ENCODE measurements at regions of chr9 and their contacts with region 1.

Region 1: DNA sequence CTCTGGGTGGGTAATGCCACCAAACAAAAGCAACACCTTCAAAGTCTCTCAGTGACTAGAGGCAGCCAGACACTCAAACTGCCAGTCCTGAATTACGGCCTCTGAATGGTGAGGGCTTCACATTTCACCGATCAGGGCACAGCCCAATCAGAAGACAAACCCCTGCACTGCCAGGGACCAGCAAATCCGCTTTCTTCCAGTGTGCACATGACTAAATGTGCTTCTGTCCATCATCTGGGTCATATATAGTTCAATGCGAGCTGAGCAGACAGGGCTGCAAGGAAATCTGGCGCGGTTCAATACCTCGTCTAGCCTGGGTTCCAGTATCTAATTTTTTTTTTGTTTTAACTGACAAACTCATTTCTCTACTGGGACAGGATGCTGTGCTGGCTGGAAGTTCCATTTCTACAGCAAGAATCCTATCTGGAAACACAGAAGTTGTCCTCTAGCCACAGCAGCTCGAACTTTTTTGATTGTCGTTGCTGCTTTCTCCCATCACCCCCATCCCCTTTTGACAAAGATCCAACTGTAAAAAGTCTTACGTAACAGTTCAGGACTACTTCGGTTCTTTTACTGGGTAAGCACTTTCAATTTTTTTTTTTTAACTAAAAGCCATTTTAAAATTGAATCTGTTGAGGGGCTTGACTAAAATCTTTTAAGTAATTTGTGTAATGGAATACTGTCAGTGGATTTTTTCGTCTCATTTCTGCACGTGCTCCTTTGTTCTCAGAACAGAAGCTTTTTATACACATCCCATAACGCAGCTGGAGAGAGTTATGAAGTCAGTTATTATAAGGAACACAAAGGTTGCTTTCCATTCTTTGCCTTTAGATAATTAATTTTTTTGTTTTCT is 112.7 kb downstream of the NR6A1 start:
- DNase-seq: peak; percentile 83

Region 2: GRCh38 chr9:124675261-124676158 is 17.1 kb after region 1 on chr9:
- CTCF ChIA-PET with region 1: interaction called, 3 read pairs
- POLR2A ChIA-PET with region 1: interaction called, 10 read pairs
- DNase-seq: no peak

Region 3: DNA sequence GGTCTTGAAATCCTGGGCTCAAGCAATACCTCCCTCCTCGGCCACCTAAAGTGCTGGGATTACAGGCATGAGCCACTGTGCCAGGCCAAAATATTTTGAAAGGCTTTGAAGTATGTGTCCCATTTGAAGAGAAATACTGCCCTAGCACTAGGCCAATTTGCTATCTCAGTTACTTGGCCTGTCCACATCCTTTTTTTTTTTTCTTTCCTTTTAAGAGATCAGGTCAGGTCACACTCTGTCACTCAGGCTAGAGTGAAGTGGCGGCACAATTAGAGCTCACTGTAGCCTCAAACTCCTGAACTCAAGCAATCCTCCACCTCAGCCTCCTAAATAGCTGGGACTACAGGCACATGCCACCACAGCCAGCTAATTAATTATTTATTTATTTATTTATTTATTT is 28.5 kb after region 1 on chr9:
- CTCF ChIA-PET with region 1: no interaction called
- POLR2A ChIA-PET with region 1: no interaction called
- DNase-seq: no peak